ENCODE measurements at regions of chr3 and their contacts with region 1.

Region 1: DNA sequence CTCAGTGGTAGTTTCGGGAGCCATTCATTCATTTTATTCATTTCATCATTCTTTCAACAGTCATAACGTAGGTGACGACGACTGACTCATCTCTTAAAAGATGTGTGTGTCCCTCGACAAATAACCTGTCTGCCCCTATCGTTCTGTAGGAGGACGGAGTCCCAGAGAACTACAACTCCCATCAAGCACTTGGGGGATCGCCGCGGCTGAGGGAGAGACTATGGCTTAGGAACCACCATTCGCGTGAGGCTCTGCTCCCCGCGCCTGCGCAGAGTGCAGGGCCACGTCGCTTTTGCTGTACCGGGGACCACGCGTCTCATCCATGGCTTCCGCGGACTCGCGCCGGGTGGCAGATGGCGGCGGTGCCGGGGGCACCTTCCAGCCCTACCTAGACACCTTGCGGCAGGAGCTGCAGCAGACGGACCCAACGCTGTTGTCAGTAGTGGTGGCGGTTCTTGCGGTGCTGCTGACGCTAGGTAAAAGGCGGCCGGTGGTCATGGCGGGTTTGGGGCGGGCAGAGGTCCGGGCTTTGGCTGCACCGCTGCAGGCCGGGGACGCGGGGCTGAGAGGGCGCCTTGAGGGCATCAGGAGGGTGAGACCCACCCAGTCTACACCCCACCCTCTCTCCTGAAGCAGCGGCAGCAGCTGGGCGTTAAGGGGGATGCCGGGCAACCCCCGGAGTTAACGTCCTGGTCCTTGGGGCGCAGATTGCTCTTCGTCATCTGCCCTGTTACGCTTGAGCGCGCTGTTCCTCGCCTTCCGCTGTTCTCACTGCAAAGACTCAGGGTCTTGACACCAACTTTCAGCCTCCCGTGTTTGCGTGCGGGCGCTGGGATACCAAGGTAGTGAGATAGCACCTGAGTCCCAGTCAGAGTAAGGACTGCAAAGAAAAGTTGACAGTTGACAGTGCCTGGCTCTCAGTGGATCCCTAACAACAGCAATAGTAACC is at the start of gene SRPRB:
- DNase-seq: peak; percentile 88
- ATAC-seq: peak; percentile 98
- H3K4me3 ChIP-seq: peak within 1 kb of the TSS; percentile 87 to 89
- H3K27ac ChIP-seq: peak within 1 kb of the TSS; percentile 20
- H3K4me1 ChIP-seq: peaks cover 3 to 11% of the 10 kb centered on the region in 2 experiments
- H3K27me3 ChIP-seq: no peaks in the 10 kb centered on the region
- CTCF ChIP-seq: no peak
- POLR2A ChIP-seq: peak; percentile 63
- RAD21 ChIP-seq: no peak
- total RNA-seq, gene SRPRB: 61.0 TPM

Region 2: DNA sequence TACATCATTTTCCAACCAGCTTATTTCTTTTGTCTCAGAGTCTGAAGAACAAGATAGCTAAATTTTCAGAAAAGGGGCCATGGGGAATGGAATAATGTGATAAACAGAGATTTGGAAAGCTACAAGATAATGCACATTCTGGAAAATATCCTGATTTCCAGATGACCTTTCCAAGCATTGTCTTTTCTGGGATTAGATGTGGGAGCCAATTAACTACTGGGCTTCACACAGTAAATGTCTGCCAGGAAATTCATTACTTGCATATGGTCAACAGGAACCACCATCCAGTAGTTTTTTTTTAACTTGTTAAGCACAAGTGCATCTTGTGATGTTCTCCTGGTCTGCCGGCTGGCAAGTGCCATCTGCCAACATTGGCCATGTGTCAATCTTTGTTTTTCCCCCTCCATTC is 537.1 kb before region 1 on chr3:
- CTCF ChIA-PET with region 1: no interaction called
- POLR2A ChIA-PET with region 1: no interaction called
- RAD21 ChIA-PET with region 1: no interaction called
- intact Hi-C with region 1: no loop called
- DNase-seq: no peak
- ATAC-seq: no peak
- H3K4me3 ChIP-seq: no peak overlapping the region
- H3K27ac ChIP-seq: no peak overlapping the region
- H3K4me1 ChIP-seq: no peaks in the 10 kb centered on the region
- H3K27me3 ChIP-seq: peaks cover 52% of the 10 kb centered on the region
- CTCF ChIP-seq: no peak
- POLR2A ChIP-seq: no peak
- RAD21 ChIP-seq: no peak

Region 3: GRCh38 chr3:133448478-133449122 is 357.2 kb before region 1 on chr3:
- CTCF ChIA-PET with region 1: no interaction called
- POLR2A ChIA-PET with region 1: no interaction called
- RAD21 ChIA-PET with region 1: no interaction called
- intact Hi-C with region 1: loop called (anchors 10 kb)
- DNase-seq: no peak
- ATAC-seq: no peak
- H3K4me3 ChIP-seq: no peak overlapping the region
- H3K27ac ChIP-seq: no peak overlapping the region
- H3K4me1 ChIP-seq: peaks cover 0 to 7% of the 10 kb centered on the region in 2 experiments; a peak in 2 of 4 replicates
- H3K27me3 ChIP-seq: no peaks in the 10 kb centered on the region; the same call in 1 of the 2 replicates
- CTCF ChIP-seq: no peak
- POLR2A ChIP-seq: no peak
- RAD21 ChIP-seq: no peak

Region 4: GRCh38 chr3:134222835-134223234 is 417.0 kb after region 1 on chr3:
- CTCF ChIA-PET with region 1: no interaction called
- POLR2A ChIA-PET with region 1: no interaction called
- RAD21 ChIA-PET with region 1: no interaction called
- intact Hi-C with region 1: loop called (anchors 5 kb)
- DNase-seq: no peak
- ATAC-seq: no peak
- H3K4me3 ChIP-seq: no peak overlapping the region
- H3K27ac ChIP-seq: no peak overlapping the region
- H3K4me1 ChIP-seq: 0 out of 4 replicates have a peak, but pooled peaks cover 0 to 4% of the 10 kb centered on the region in 2 experiments
- H3K27me3 ChIP-seq: no peaks in the 10 kb centered on the region
- CTCF ChIP-seq: no peak
- POLR2A ChIP-seq: no peak
- RAD21 ChIP-seq: no peak